SK-N-SH (cell line): ENCODE measurements at regions of chr7 and their contacts with region 1.

Region 1: DNA sequence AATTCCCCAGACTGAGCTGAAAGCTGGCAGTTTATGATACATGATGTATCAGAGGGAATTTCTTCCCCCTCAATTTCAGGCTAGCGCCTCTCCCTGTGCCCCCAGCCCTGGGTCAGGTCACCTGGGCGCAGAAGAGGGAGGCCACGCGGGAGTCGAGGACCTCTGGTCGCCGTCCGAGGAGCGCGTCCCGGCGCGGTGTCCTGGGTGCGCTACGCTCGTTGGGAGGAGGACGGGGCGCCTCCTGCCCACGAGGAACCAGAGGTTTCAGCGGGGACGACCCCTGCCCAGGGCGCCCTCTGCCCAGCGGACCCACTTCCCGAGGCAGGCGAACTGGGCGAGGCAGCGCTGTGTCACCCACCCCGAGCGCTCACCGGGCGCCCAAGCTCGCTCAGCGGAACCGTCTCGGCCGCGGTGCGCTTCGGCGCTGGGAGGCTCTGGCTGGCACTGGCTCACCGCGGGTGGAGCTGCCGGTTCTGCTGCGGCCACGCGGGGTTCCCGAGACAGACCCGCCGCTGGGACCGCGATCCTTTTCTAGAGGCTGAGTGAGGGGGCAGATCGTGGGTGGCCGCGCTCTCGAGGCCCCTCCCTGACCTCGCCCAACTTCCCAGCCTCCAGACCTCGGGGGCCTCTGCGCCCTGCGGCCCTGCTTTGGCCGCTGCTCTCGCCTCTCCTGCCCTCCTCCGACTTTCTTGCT is at the start of gene FAM237B:
- DNase-seq: peak; percentile 84
- H3K4me3 ChIP-seq: peak within 1 kb of the TSS; percentile 54 to 58
- H3K27ac ChIP-seq: no peak within 1 kb of the TSS
- H3K4me1 ChIP-seq: peaks cover 0 to 10% of the 10 kb centered on the region in 2 experiments; a peak in 2 of 4 replicates
- H3K27me3 ChIP-seq: peaks cover 6% of the 10 kb centered on the region; the same call in 1 of the 2 replicates
- CTCF ChIP-seq: no peak
- EP300 ChIP-seq: no peak
- RAD21 ChIP-seq: no peak
- polyA plus RNA-seq, gene FAM237B: 0.02 and 0.03 TPM in 2 replicates

Region 2: DNA sequence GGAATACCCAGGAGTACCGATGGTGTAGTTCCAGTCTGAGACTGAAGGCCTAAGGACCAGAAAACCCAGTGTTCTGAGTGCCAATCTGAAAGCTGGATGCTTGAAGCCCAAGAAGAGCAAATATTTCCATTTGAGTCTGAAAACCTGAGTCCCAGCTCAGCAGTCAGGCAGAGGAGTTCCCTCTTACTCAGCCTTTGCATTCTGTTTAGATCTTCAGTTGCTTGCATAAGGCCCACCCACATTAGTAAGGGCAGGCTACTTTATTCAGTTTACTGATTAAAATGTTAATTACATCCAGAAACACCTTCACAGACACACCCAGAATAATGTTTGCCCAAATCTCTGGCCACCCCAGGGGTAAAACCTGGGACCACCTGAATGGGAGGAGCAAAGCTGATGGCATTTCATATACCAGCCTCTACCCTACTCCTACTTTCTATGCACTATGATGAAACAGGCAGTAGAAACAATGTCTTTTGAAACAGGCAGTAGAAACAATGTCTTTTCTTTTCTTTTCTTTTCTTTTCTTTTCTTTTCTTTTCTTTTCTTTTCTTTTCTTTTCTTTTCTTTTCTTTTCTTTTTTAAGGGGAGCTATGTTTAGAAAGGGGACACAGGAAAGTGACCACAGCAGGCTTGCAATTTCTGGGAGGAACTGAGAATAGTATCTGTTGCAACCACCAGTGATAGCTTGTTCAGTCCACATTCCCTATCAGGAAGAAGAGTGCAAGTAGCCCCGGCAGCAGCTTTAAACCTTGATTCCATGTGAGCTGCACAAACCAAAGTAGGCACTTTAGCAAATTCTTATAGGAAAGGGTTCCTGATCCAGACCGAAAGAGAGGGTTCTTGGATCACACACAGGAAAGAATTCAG is 30.5 kb before region 1 on chr7:
- CTCF ChIA-PET with region 1: no interaction called
- POLR2A ChIA-PET with region 1: no interaction called
- DNase-seq: no peak
- H3K4me3 ChIP-seq: no peak overlapping the region
- H3K27ac ChIP-seq: no peak overlapping the region
- H3K4me1 ChIP-seq: no peaks in the 10 kb centered on the region
- H3K27me3 ChIP-seq: no peaks in the 10 kb centered on the region
- CTCF ChIP-seq: no peak
- EP300 ChIP-seq: no peak
- RAD21 ChIP-seq: no peak

Region 3: DNA sequence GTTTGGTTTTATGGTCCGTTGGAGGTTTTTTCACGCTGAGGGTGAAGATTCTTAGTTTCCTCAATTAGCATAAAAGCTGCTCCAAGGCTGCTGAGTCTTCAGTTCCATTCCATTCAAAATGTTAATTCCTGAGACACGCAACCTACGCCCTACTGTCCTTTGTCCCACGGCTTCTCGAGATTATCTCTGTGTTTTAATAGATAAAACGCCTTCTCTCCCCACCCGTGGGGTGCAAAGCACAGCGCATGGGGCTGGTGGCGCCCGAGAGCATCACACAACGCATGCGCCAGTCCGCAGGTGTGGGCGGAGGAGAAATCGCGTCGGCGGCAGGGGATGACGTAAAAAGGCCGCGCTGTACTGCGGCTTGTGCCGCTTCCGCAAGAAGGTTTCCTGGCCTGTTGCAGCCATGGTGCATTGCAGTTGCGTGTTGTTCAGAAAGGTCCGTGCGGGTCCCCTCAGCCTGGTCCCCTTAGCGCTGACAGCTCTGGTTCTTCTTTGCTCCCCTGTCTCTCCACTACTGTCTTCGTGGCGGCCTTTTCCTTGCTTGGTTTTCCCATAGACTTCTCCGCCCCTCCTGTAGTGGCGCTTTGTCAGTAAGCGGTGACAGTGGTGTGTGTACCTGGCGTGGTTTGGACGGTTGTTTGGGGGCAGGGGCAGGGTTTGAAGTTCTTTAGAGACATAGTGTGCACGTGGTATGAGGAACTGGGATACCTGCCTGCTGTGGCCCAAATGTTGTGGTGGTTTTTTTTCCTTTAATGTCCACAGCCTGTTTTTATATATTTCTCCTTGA is 25.6 kb after region 1 on chr7 and contains the start of gene GTPBP10:
- CTCF ChIA-PET with region 1: interaction called, 11 read pairs
- POLR2A ChIA-PET with region 1: interaction called, 3 read pairs
- DNase-seq: peak; percentile 96
- H3K4me3 ChIP-seq: peak within 1 kb of the TSS; percentile 81 to 95
- H3K27ac ChIP-seq: peak within 1 kb of the TSS; percentile 74 to 89
- H3K4me1 ChIP-seq: peaks cover 7 to 15% of the 10 kb centered on the region in 2 experiments; a peak in 3 of 4 replicates
- H3K27me3 ChIP-seq: no peaks in the 10 kb centered on the region
- CTCF ChIP-seq: peak; percentile 84
- EP300 ChIP-seq: no peak
- RAD21 ChIP-seq: peak; percentile 51
- polyA plus RNA-seq, gene GTPBP10: 8.5 and 10.9 TPM in 2 replicates